HEK293 (cell line): ENCODE measurements at regions of chr11 and their contacts with region 1.

Region 1: DNA sequence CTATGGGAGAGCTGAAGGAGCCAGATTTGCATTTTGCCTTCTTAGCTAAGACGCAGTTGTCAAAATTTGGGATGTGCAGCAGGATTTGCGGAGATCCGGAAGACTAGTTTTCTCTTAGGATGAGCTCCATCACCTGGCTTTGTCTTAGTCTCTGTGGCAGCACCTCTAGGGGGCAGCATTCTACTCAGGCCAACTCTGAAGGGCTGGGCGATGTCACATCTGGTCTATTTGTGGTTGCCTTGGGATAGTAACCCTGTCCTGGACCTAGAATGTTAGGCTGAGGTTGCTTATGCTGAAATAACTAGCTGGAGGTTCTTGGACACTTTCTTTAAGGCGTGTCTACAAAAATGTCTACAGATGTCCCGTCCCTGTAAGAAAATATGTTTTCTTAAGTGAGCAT is 116.2 kb downstream of the FAT3 start:
- H3K4me3 ChIP-seq: no peak overlapping the region
- H3K27ac ChIP-seq: no peak overlapping the region
- H3K4me1 ChIP-seq: no peaks in the 10 kb centered on the region
- CTCF ChIP-seq: no peak

Region 2: DNA sequence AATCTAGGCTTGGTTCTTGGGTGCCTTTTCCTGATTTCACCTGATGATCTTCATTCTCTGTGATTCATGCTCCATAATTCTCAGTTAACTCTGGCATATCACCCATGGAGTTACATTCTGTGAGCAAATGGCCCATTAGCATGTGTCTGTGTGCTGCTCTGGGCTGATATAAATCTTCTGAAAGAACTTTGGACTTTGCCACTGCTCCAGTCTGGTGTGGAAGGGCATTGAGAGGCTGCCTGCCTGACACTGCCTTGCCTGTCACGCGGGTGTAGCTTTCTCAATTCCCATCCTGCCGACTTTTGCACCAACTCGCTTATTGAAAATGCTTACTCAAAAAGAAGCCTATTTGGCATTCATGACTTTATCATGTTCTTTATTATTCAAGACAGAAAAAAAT is 74.0 kb before region 1 on chr11:
- CTCF ChIA-PET with region 1: no interaction called
- POLR2A ChIA-PET with region 1: no interaction called
- H3K4me3 ChIP-seq: no peak overlapping the region
- H3K27ac ChIP-seq: no peak overlapping the region
- H3K4me1 ChIP-seq: no peaks in the 10 kb centered on the region
- CTCF ChIP-seq: no peak

Region 3: DNA sequence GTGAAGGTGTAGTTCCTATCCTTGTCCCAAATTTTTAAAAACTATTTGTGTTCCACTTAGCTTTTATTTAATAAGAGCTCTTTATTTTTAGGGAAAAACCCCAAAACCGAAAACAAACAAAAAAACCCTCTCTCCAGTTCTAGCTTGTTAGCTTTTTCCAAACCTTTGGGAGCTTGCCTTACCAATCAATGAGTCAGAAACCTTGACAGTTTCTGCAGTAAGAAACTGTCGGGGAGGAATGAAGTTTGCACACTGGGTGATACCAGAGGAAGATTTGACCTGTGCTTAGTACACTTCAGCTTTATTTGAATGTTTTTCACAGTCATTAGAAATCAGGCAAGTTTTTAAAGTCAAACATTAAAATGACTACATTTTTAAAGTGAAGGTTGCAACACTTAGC is 11.2 kb before region 1 on chr11:
- CTCF ChIA-PET with region 1: interaction called, 31 read pairs
- POLR2A ChIA-PET with region 1: no interaction called
- H3K4me3 ChIP-seq: no peak overlapping the region
- H3K27ac ChIP-seq: no peak overlapping the region
- H3K4me1 ChIP-seq: peaks cover 13% of the 10 kb centered on the region; the same call in 1 of the 2 replicates
- CTCF ChIP-seq: no peak

Region 4: DNA sequence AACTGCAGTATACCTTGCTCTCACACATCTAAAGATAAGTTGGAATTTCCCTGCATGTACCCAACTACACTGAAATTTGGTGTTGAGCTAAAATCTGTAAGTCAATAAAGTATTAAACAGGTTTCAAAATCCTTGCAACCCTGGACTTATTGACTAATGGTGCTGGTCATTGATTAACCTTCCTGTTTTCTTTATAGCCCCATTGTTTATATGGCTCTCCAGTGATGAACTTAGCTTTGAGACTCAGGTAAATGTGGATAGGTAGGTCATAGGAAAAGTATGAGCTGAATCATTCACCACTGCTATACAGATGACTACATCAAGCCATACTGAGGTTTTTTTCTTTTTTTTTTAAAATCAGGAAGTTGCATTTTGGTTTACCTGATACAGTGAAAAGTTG is 16.5 kb after region 1 on chr11:
- CTCF ChIA-PET with region 1: interaction called, 11 read pairs
- POLR2A ChIA-PET with region 1: no interaction called
- H3K4me3 ChIP-seq: no peak overlapping the region
- H3K27ac ChIP-seq: no peak overlapping the region
- H3K4me1 ChIP-seq: no peaks in the 10 kb centered on the region
- CTCF ChIP-seq: no peak

Region 5: DNA sequence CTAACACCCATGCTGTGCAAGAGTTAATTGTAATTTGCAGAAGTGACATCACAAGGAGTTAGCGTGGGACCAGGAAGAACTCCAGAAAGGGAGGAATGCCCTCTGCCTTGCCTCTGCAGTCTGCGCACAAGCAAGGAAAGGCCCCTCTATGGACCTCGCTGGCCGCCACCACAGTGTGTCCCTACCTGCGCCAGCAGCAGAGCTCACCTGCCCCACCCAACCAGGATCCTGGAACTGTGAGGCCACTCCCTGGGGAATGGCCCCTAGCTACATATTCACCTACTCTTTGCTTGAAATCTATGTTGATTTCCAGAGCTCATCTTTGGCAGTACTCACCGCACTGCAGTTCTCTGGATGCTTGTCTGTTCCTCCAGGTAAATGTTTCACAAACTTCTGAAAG is 556.6 kb after region 1 on chr11:
- CTCF ChIA-PET with region 1: no interaction called
- POLR2A ChIA-PET with region 1: no interaction called
- H3K4me3 ChIP-seq: no peak overlapping the region
- H3K27ac ChIP-seq: no peak overlapping the region
- H3K4me1 ChIP-seq: no peaks in the 10 kb centered on the region
- CTCF ChIP-seq: no peak